ENCODE measurements at regions of chr9 and their contacts with region 1.

Region 1: GRCh38 chr9:119951090-119951489 is 581.9 kb upstream of the BRINP1 start:
- DNase-seq: no peak
- H3K4me3 ChIP-seq: no peak overlapping the region
- H3K27ac ChIP-seq: peak overlapping the region in 3 of 4 donors; percentile 13 to 65 (median 53)
- H3K4me1 ChIP-seq: peaks cover 0 to 47% (median 33%) of the 10 kb centered on the region in 4 donors
- H3K27me3 ChIP-seq: no peaks in the 10 kb centered on the region
- CTCF ChIP-seq: no peak
- EP300 ChIP-seq: no peak
- POLR2A ChIP-seq: no peak

Region 2: GRCh38 chr9:119868694-119869093 is 82.4 kb before region 1 on chr9:
- intact Hi-C with region 1: loop called (anchors 10 kb)
- DNase-seq: no peak
- H3K4me3 ChIP-seq: no peak overlapping the region
- H3K27ac ChIP-seq: peak overlapping the region; percentile 67 to 77 (median 74)
- H3K4me1 ChIP-seq: peaks cover 0 to 57% (median 18%) of the 10 kb centered on the region in 4 donors
- H3K27me3 ChIP-seq: no peaks in the 10 kb centered on the region
- CTCF ChIP-seq: no peak
- EP300 ChIP-seq: peak; percentile 91
- POLR2A ChIP-seq: no peak

Region 3: GRCh38 chr9:119905724-119906123 is 45.4 kb before region 1 on chr9:
- intact Hi-C with region 1: no loop called
- DNase-seq: no peak
- H3K4me3 ChIP-seq: no peak overlapping the region
- H3K27ac ChIP-seq: no peak overlapping the region
- H3K4me1 ChIP-seq: no peaks in the 10 kb centered on the region
- H3K27me3 ChIP-seq: no peaks in the 10 kb centered on the region
- CTCF ChIP-seq: no peak
- EP300 ChIP-seq: no peak
- POLR2A ChIP-seq: no peak